Activated naive CD4-positive, alpha-beta T cell treated with anti-CD3 and anti-CD28 coated beads for 36 hours (primary cell): ENCODE measurements at regions of chr10 and their contacts with region 1.

Region 1: DNA sequence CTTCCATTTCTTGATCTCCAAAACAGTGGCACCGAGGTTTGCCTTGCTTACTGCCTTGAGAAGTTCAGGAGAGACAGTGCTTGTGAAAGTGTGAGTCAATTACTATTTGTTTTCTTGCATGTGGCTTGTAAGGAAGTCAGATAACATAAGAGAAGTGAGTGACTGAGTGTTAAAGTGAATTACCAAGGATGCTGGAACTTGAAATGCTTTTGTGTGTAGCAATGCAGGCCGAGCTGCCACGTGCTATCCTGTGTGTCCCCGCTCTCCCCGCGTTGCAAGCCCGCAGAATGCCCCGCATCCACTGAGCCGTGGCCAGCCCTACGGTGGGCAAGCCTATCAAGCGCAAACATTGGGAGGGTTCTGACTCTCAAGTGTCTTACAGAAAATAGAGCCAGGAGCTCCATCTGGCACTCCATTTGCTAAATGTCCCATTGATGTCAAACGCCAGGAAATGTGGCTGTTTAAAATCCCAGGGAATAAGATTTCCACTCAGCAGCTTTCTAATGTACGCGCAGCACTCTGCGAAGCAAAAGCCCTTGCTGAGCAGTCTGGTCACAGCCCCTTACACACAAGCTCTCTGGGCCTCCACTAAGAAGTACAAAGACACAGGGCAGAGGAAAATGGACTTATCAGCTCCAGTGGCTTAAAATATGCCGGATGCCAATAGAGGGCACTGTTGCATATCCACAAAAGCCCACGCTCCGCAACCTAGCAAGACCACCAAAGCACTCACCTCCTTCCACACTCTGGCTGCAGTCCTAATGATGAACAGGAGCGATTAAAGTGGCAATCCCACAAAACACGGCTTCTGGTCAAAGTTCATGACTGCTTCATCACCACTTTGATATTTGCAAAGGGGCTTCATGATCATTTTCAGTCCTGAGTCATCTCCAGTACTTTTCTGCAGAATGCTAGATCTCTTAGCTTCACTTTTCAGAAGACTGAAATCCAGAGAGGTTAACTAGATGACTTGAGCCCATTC is 158.0 kb upstream of the ITGB1 start:
- DNase-seq: no peak
- H3K4me3 Mint-ChIP-seq: no peak overlapping the region
- H3K27ac Mint-ChIP-seq: no peak overlapping the region
- H3K4me1 Mint-ChIP-seq: peaks cover 60% of the 10 kb centered on the region
- H3K27me3 Mint-ChIP-seq: no peaks in the 10 kb centered on the region

Region 2: DNA sequence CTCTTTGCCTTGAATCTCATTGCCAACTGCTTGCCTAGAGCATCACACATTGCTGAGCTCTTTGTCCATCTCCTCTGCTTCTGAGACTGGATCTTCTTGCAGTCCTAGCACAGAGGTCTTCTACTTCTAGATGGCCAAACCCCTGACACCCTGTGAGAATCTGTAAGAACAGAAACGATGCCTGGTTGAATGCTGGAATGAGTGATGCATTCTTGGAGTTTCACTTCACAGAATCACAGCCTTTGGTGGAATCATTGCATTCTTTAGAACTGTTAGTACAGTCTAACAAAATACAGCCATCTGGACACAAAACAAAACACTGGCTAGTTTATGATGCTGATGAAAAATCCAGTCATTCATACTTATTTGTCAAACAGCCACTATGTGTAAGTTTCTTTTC is 16.3 kb before region 1 on chr10:
- CTCF ChIA-PET with region 1: interaction called, 20 read pairs
- intact Hi-C with region 1: loop called (anchors 1 kb)
- DNase-seq: no peak
- H3K4me3 Mint-ChIP-seq: no peak overlapping the region
- H3K27ac Mint-ChIP-seq: no peak overlapping the region
- H3K4me1 Mint-ChIP-seq: peaks cover 30% of the 10 kb centered on the region
- H3K27me3 Mint-ChIP-seq: no peaks in the 10 kb centered on the region

Region 3: GRCh38 chr10:33143160-33143728 is 27.2 kb after region 1 on chr10:
- CTCF ChIA-PET with region 1: interaction called, 6 read pairs
- intact Hi-C with region 1: loop called (anchors 1 kb)
- DNase-seq: peak; percentile 82
- H3K4me3 Mint-ChIP-seq: no peak overlapping the region
- H3K27ac Mint-ChIP-seq: peak overlapping the region; percentile 50
- H3K4me1 Mint-ChIP-seq: peaks cover 52% of the 10 kb centered on the region
- H3K27me3 Mint-ChIP-seq: no peaks in the 10 kb centered on the region

Region 4: GRCh38 chr10:33155720-33156638 is 40.0 kb after region 1 on chr10:
- CTCF ChIA-PET with region 1: interaction called, 18 read pairs
- intact Hi-C with region 1: loop called (anchors 1 kb)
- DNase-seq: peak; percentile 55
- H3K4me3 Mint-ChIP-seq: no peak overlapping the region
- H3K27ac Mint-ChIP-seq: no peak overlapping the region
- H3K4me1 Mint-ChIP-seq: peaks cover 35% of the 10 kb centered on the region
- H3K27me3 Mint-ChIP-seq: no peaks in the 10 kb centered on the region

Region 5: GRCh38 chr10:33211106-33211878 is 95.3 kb after region 1 on chr10:
- CTCF ChIA-PET with region 1: no interaction called
- intact Hi-C with region 1: loop called (anchors 1 kb)
- DNase-seq: peak; percentile 65
- H3K4me3 Mint-ChIP-seq: no peak overlapping the region
- H3K27ac Mint-ChIP-seq: peak overlapping the region; percentile 55
- H3K4me1 Mint-ChIP-seq: peaks cover 20% of the 10 kb centered on the region
- H3K27me3 Mint-ChIP-seq: no peaks in the 10 kb centered on the region

Region 6: GRCh38 chr10:33258967-33259366 is 142.9 kb after region 1 on chr10:
- CTCF ChIA-PET with region 1: no interaction called
- intact Hi-C with region 1: loop called (anchors 1 kb)
- DNase-seq: no peak
- H3K4me3 Mint-ChIP-seq: no peak overlapping the region
- H3K27ac Mint-ChIP-seq: no peak overlapping the region
- H3K4me1 Mint-ChIP-seq: peaks cover 9% of the 10 kb centered on the region
- H3K27me3 Mint-ChIP-seq: peaks cover 39% of the 10 kb centered on the region